Common myeloid progenitor, CD34-positive (primary cell): ENCODE measurements at regions of chr17 and their contacts with region 1.

Region 1: GRCh38 chr17:80426681-80427326 is 11.8 kb downstream of the ENDOV start:
- DNase-seq: peak; percentile 67 to 90 (median 87)
- H3K4me3 ChIP-seq: peak overlapping the region in 2 of 7 experiments; percentile 1 to 23
- H3K27ac ChIP-seq: no peak overlapping the region
- H3K4me1 ChIP-seq: peaks cover 0 to 14% (median 10%) of the 10 kb centered on the region in 4 experiments
- H3K27me3 ChIP-seq: no peaks in the 10 kb centered on the region

Region 2: GRCh38 chr17:80270836-80271235 is 156.0 kb before region 1 on chr17:
- CTCF ChIA-PET with region 1: no interaction called
- POLR2A ChIA-PET with region 1: no interaction called
- DNase-seq: peak in 1 of 3 donors; percentile 33
- H3K4me3 ChIP-seq: no peak overlapping the region
- H3K27ac ChIP-seq: no peak overlapping the region
- H3K4me1 ChIP-seq: no peaks in the 10 kb centered on the region
- H3K27me3 ChIP-seq: no peaks in the 10 kb centered on the region

Region 3: DNA sequence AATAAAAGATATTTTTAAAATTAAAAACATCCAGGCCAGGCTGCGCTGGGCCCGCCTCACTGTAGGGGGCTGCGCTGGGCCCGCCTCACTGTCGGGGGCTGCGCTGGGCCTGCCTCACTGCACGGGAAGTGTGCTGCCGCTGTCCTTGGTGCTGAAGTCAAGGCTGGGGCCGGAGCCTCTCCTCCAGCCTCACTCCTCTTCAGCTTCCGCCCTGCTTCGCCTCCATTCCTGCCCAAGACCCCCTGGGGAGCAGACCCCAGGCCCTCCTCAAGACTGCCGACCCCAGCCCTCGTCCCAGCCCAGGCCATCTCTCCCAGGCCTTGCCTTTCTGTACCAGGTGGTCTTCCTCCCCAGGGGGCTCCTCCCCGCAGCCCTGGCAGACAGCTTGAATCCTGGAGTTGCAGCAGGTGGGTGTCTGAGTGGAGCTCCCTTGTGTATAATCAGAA is 14.4 kb after region 1 on chr17:
- CTCF ChIA-PET with region 1: interaction called, 14 read pairs
- POLR2A ChIA-PET with region 1: no interaction called
- DNase-seq: peak; percentile 38 to 79 (median 77)
- H3K4me3 ChIP-seq: no peak overlapping the region
- H3K27ac ChIP-seq: no peak overlapping the region
- H3K4me1 ChIP-seq: no peaks in the 10 kb centered on the region
- H3K27me3 ChIP-seq: peaks cover 0 to 4% (median 0%) of the 10 kb centered on the region in 5 experiments

Region 4: DNA sequence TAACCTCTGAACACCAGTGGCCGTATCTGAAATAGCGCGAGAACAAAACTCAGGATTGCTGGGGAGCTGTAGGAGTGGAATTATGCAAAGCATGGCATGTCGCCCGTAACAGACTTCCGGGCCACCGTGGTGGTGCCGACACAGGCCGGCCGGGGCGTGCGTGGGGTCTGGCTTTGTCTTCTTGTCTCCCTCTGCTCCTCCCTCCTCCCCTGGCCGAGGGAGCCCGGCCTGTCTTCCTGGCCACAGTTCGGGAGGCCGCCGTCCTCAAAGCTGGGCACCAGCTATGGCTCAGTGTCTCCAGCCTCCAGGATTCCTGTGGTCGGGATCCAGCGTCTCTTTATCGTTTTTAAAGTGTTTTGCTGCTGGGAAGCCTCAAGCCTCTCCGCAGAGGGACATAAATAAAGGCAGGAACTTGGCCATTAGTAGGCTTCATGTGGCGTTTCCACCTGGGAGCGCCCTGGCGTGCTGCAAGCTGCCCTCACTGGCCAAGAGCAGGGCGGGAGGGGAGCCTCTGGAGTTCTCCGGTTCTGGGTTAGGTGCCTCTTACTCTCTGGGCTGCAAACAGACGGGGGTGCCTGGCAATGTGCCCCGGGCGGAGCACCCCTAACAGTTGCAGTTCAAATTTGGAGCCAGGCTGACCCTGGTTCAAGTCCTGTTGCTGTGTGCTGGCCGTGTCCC is 71.6 kb after region 1 on chr17:
- CTCF ChIA-PET with region 1: no interaction called
- POLR2A ChIA-PET with region 1: no interaction called
- DNase-seq: peak in 1 of 3 donors; percentile 44
- H3K4me3 ChIP-seq: no peak overlapping the region
- H3K27ac ChIP-seq: no peak overlapping the region
- H3K4me1 ChIP-seq: no peaks in the 10 kb centered on the region
- H3K27me3 ChIP-seq: peaks cover 0 to 72% (median 19%) of the 10 kb centered on the region in 5 experiments

Region 5: DNA sequence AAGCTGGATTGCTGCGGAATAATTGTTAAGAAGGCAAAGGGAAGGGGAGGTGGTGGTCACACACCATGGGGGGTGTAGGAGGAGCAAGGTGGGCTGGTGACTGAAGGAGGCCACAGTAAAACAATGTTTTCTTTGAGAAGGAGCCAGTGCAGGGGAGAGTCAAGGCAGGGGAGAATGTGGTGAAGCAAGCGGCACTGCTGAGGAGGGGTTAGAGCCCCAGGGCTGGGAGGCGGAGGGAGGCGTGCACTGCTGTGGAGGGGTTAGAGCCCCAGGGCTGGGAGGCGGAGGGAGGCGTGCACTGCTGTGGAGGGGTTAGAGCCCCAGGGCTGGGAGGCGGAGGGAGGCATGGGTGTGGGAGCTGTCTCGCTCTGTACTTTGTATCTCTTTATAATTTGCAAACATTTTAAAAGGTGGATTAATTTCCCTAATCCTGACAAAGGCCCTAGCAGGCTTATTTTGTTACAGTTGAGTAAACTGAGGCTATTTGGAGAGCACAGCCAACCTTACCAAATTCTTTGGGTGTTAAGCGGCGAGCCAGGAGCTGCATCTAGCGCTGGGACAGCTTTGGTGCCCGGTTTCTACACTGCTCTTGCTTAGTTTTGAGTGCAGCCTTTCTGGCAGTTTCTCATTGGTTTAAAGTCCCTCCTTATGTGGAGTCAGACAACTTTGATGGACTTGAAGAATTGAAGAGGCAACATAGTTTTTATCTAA is 138.7 kb after region 1 on chr17:
- CTCF ChIA-PET with region 1: interaction called, 3 read pairs
- POLR2A ChIA-PET with region 1: interaction called, 16 read pairs
- DNase-seq: no peak
- H3K4me3 ChIP-seq: no peak overlapping the region
- H3K27ac ChIP-seq: no peak overlapping the region
- H3K4me1 ChIP-seq: no peaks in the 10 kb centered on the region
- H3K27me3 ChIP-seq: no peaks in the 10 kb centered on the region

Region 6: GRCh38 chr17:80575057-80575875 is 148.5 kb after region 1 on chr17:
- CTCF ChIA-PET with region 1: interaction called, 12 read pairs
- POLR2A ChIA-PET with region 1: no interaction called
- DNase-seq: peak; percentile 91 to 96 (median 94)
- H3K4me3 ChIP-seq: no peak overlapping the region
- H3K27ac ChIP-seq: no peak overlapping the region
- H3K4me1 ChIP-seq: no peaks in the 10 kb centered on the region
- H3K27me3 ChIP-seq: no peaks in the 10 kb centered on the region

Region 7: GRCh38 chr17:80899402-80900268 is 472.8 kb after region 1 on chr17:
- CTCF ChIA-PET with region 1: interaction called, 14 read pairs
- POLR2A ChIA-PET with region 1: no interaction called
- DNase-seq: peak; percentile 40 to 70 (median 61)
- H3K4me3 ChIP-seq: no peak overlapping the region
- H3K27ac ChIP-seq: no peak overlapping the region
- H3K4me1 ChIP-seq: no peaks in the 10 kb centered on the region
- H3K27me3 ChIP-seq: no peaks in the 10 kb centered on the region